AG04450 (cell line): ENCODE measurements at regions of chr4 and their contacts with region 1.

Region 1: DNA sequence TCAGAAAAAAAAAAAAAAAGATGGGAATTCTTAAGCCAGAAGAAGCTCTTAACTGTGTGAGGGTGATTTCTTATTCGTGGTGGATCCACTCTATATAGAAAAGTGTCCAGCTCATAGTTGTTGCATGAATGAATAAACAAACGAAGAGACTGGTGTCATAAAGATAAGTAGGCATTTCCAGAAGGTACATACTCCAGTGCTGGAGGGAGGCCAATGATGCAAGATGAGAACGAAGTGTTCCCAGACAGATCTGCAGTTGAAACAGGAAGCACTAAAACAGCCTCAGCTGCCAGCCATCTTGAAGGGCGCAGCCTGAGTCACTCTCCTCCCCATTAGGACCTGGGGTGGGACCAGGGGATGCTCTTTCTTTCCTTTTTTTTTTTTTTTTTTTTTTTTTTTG is 47.4 kb upstream of the HOPX start:
- DNase-seq: peak; percentile 63
- H3K4me3 ChIP-seq: no peak overlapping the region
- H3K27ac ChIP-seq: no peak overlapping the region
- H3K27me3 ChIP-seq: peaks cover 5% of the 10 kb centered on the region
- CTCF ChIP-seq: no peak

Region 2: DNA sequence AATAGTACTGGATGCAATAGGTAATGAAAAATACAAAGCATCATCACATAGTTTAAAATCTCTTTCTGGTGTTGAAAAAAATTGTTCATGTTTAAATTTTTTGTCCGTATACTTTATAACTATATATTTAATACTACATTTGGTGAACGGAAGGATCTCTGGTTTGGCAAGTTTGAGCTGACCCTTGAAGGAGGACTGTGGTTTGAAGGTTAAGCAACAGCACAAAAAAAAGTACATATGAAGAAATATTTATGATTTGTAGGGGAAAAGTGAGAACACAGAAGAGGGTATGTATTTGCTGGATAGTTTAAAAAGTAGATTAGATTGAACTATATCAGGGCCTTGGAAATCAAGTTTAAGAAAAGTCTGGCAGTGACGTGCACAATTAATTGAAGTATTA is 247.8 kb before region 1 on chr4:
- CTCF ChIA-PET with region 1: interaction called, 13 read pairs
- POLR2A ChIA-PET with region 1: no interaction called
- DNase-seq: no peak
- H3K4me3 ChIP-seq: no peak overlapping the region
- H3K27ac ChIP-seq: no peak overlapping the region
- H3K27me3 ChIP-seq: no peaks in the 10 kb centered on the region
- CTCF ChIP-seq: no peak